Colonic mucosa (tissue), 4 donors: ENCODE measurements at regions of chr12 and their contacts with region 1.

Region 1: DNA sequence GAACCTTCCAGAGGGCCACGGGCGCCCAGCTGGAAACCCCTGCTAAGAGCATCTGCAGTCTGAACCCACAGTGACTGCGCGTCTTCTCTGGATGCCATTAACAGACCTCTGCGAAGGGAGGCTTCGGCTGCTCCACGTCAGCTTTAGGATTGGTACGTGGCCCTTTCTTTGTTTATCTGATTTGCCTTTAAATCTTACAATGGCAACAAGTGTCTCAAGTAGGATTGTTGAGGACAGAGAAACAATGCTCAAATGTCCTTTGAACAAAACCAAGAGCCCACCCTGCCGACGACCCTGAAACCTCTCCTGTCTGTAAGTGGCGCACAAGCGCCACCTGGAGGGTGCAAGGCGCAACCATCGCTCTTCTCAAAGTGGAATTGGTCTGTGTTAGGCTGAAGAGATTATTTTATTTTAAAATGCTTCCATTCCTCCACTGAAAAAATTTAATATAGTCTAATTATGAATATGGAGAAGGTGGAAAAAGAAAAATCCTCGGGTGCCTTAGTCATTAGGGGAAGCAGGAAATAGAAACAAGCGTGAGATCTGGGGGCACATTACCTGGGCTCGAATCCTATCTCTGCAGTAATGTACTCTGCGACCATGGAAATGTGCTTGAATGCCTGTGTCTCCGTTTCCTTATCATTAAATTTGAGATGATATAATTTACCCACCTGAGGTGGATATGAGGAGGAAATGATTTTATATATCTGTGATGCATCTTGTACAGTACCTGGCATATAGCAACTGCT is 82.6 kb upstream of the PTPRB start:
- DNase-seq: peak; percentile 38
- H3K4me3 ChIP-seq: no peak overlapping the region
- H3K27ac ChIP-seq: no peak overlapping the region
- H3K4me1 ChIP-seq: no peaks in the 10 kb centered on the region
- H3K27me3 ChIP-seq: no peaks in the 10 kb centered on the region
- CTCF ChIP-seq: peak; percentile 88

Region 2: GRCh38 chr12:69879041-69879960 is 840.5 kb before region 1 on chr12:
- intact Hi-C with region 1: loop called (anchors 5 kb)
- DNase-seq: peak; percentile 82
- H3K4me3 ChIP-seq: peak overlapping the region; percentile 14
- H3K27ac ChIP-seq: no peak overlapping the region
- H3K4me1 ChIP-seq: no peaks in the 10 kb centered on the region
- H3K27me3 ChIP-seq: no peaks in the 10 kb centered on the region
- CTCF ChIP-seq: peak; percentile 85

Region 3: GRCh38 chr12:70660620-70661219 is 59.1 kb before region 1 on chr12:
- intact Hi-C with region 1: no loop called
- DNase-seq: no peak
- H3K4me3 ChIP-seq: no peak overlapping the region
- H3K27ac ChIP-seq: no peak overlapping the region
- H3K4me1 ChIP-seq: no peaks in the 10 kb centered on the region
- H3K27me3 ChIP-seq: no peaks in the 10 kb centered on the region
- CTCF ChIP-seq: no peak